ENCODE measurements at regions of chr16 and their contacts with region 1.

Region 1: DNA sequence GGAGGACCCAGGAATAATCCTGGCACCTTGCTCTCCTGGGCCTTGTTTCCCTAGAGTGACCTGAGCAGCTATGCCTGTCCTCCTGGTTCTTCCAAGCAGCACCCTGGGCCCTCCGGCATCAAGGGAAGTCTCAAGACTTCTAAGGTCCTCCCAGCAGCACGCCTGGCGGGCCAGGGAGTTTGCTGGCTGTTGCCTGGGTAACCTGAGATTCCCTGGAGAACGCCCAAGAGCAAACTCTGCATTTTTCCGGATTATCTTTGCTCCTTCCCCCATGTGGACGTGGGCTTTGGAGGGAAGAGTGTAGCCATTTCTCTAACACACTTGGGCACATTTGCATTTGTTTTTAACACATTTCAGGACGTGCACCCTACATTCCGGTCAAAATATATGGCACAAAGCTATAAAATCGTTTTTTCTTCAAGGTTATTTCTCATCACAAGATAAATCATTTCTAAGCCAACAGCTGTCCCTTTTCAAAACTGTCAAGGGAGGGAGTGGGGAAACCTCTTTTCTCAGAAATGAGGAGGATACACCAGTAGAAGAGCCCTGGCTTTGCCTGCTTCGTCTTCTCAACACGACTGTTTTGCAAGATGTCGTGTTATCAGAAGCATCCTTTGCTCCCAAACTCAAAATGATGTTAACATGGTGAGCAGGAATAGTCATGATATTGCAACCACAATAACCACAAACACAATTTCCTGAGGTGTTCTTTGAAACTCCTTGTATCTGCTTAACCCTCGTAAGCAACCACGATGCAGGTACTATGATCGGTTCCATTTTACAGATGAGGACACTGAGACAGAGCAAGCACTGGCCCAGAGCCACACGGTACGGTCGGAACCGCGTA is 116.5 kb downstream of the ADCY9 start:
- DNase-seq: peak; percentile 95
- H3K4me3 ChIP-seq: peak overlapping the region; percentile 24
- H3K27ac ChIP-seq: peak overlapping the region; percentile 89
- H3K4me1 ChIP-seq: peaks cover 31% of the 10 kb centered on the region
- H3K27me3 ChIP-seq: no peaks in the 10 kb centered on the region
- CTCF ChIP-seq: no peak

Region 2: GRCh38 chr16:3880623-3881498 is 118.8 kb before region 1 on chr16 and contains the start of gene CREBBP:
- CTCF ChIA-PET with region 1: no interaction called
- POLR2A ChIA-PET with region 1: no interaction called
- intact Hi-C with region 1: no loop called
- DNase-seq: peak; percentile 94
- H3K4me3 ChIP-seq: peak within 1 kb of the TSS; percentile 94
- H3K27ac ChIP-seq: peak within 1 kb of the TSS; percentile 92
- H3K4me1 ChIP-seq: peaks cover 38% of the 10 kb centered on the region
- H3K27me3 ChIP-seq: no peaks in the 10 kb centered on the region
- CTCF ChIP-seq: no peak
- total RNA-seq, gene CREBBP: 76.1 and 79.6 TPM in 2 replicates

Region 3: GRCh38 chr16:3983081-3983520 is 16.6 kb before region 1 on chr16:
- CTCF ChIA-PET with region 1: no interaction called
- POLR2A ChIA-PET with region 1: no interaction called
- intact Hi-C with region 1: no loop called
- DNase-seq: peak; percentile 70
- H3K4me3 ChIP-seq: no peak overlapping the region
- H3K27ac ChIP-seq: no peak overlapping the region
- H3K4me1 ChIP-seq: peaks cover 16% of the 10 kb centered on the region
- H3K27me3 ChIP-seq: no peaks in the 10 kb centered on the region
- CTCF ChIP-seq: peak; percentile 90

Region 4: DNA sequence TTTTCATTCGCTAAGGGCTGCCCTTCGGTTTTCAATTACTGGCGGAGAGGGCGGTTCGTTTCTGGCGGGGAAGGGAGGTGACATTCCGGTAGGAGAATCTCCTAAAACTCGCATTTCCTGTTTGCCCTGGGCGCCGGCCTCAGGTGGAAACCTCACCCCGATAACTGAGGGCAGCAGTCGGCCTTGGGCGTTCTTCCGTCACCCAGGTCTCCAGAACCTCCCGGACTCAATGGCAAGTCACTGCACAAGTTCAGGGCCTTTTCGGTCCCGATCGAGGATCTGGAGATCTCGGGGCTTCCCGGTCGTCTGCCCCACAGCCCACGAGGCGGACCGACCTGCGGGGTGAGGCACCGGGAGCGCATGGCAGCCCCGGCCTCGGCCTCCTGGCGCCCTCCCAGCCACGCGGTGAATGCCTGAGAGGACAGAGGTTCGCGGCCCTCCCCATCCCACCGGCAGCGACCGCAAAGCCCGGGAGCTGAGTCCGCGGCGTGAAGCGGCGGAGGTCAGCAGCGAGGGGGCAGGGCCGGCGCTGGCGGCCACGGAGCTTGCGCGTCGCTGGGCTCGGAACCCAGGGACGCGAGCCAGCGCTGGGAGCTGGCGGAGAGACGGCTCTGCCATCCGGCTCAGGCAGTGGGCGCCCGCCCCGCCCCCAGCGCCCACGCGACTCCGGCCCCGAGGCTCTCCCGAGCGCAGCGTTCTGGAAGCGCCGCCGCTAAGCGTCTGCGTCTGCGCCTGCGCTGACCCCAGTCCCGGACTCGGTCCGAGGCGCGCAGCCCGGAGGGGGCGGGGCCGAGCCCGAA is 183.7 kb after region 1 on chr16:
- CTCF ChIA-PET with region 1: no interaction called
- POLR2A ChIA-PET with region 1: no interaction called
- intact Hi-C with region 1: loop called (anchors 10 kb)
- DNase-seq: peak; percentile 94
- H3K4me3 ChIP-seq: peak overlapping the region; percentile 63
- H3K27ac ChIP-seq: peak overlapping the region; percentile 82
- H3K4me1 ChIP-seq: no peaks in the 10 kb centered on the region
- H3K27me3 ChIP-seq: no peaks in the 10 kb centered on the region
- CTCF ChIP-seq: no peak

Measured in A673 (cell line).